ENCODE measurements at regions of chr1 and their contacts with region 1.

Region 1: GRCh38 chr1:183655562-183656075 is 2.5 kb upstream of the APOBEC4 start:
- DNase-seq: peak; percentile 80
- ATAC-seq: peak; percentile 84
- H3K4me3 ChIP-seq: no peak overlapping the region
- H3K4me3 Mint-ChIP-seq: no peak overlapping the region
- H3K27ac ChIP-seq: no peak overlapping the region
- H3K27ac Mint-ChIP-seq: no peak overlapping the region
- H3K4me1 ChIP-seq: no peaks in the 10 kb centered on the region
- H3K4me1 Mint-ChIP-seq: no peaks in the 10 kb centered on the region
- H3K27me3 ChIP-seq: no peaks in the 10 kb centered on the region
- H3K27me3 Mint-ChIP-seq: peaks cover 5% of the 10 kb centered on the region
- CTCF ChIP-seq: peak; percentile 94

Region 2: DNA sequence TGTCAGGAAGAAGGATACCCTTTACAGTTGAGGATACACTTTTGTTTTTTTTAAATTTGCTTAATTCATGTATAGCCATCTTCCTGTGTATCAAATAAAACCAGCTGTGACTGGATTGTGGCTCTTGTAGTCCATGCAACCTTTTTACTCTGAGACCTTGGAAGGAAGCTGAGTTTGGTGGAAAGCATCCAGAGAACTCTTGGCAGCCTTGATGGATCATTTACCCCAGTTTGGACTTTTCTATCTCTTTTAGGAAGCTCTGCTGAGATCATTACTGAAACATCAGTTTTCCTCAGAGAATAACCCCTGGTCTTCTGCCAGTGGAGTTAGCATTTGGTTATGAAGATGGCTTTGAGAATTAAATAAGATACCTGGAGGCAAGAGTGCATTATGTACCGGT is 18.7 kb after region 1 on chr1:
- CTCF ChIA-PET with region 1: no interaction called
- POLR2A ChIA-PET with region 1: no interaction called
- intact Hi-C with region 1: no loop called
- DNase-seq: no peak
- ATAC-seq: no peak
- H3K4me3 ChIP-seq: no peak overlapping the region
- H3K4me3 Mint-ChIP-seq: no peak overlapping the region
- H3K27ac ChIP-seq: no peak overlapping the region
- H3K27ac Mint-ChIP-seq: no peak overlapping the region
- H3K4me1 ChIP-seq: no peaks in the 10 kb centered on the region
- H3K4me1 Mint-ChIP-seq: no peaks in the 10 kb centered on the region
- H3K27me3 ChIP-seq: no peaks in the 10 kb centered on the region
- H3K27me3 Mint-ChIP-seq: peaks cover 39% of the 10 kb centered on the region
- CTCF ChIP-seq: no peak

Region 3: GRCh38 chr1:183685112-183685713 is 29.6 kb after region 1 on chr1:
- CTCF ChIA-PET with region 1: interaction called, 48 read pairs
- POLR2A ChIA-PET with region 1: no interaction called
- intact Hi-C with region 1: loop called (anchors 1 kb)
- DNase-seq: peak; percentile 62
- ATAC-seq: peak; percentile 36
- H3K4me3 ChIP-seq: no peak overlapping the region
- H3K4me3 Mint-ChIP-seq: no peak overlapping the region
- H3K27ac ChIP-seq: no peak overlapping the region
- H3K27ac Mint-ChIP-seq: no peak overlapping the region
- H3K4me1 ChIP-seq: no peaks in the 10 kb centered on the region
- H3K4me1 Mint-ChIP-seq: no peaks in the 10 kb centered on the region
- H3K27me3 ChIP-seq: no peaks in the 10 kb centered on the region
- H3K27me3 Mint-ChIP-seq: peaks cover 15% of the 10 kb centered on the region
- CTCF ChIP-seq: peak; percentile 92

Region 4: DNA sequence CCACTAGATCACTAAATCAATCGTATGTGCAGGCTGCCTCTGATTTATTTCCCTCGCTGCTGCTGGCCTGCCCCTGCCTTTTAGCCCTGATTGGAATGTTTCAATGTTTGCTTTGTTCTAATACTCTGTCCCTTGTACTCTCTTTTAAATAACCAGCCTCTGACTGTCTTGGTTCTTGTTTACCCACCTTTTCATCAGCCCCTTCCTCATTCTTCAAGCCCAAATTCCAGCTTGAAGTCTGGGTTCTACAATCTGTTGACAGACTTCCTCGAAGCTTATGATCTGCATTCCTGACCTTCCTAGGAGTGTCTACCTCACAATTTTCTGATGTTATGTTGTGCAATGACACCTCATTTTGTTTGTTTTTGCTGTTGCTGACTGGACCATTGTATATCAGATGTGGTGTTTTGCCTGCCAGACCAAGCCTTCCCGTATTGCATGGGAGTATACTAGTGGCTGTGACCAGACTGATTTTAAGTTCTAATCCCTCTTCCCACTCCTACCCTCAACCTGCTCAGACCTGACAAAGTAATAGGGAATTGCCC is 44.1 kb after region 1 on chr1:
- CTCF ChIA-PET with region 1: no interaction called
- POLR2A ChIA-PET with region 1: no interaction called
- intact Hi-C with region 1: no loop called
- DNase-seq: no peak
- ATAC-seq: no peak
- H3K4me3 ChIP-seq: no peak overlapping the region
- H3K4me3 Mint-ChIP-seq: no peak overlapping the region
- H3K27ac ChIP-seq: no peak overlapping the region
- H3K27ac Mint-ChIP-seq: no peak overlapping the region
- H3K4me1 ChIP-seq: no peaks in the 10 kb centered on the region
- H3K4me1 Mint-ChIP-seq: no peaks in the 10 kb centered on the region
- H3K27me3 ChIP-seq: no peaks in the 10 kb centered on the region
- H3K27me3 Mint-ChIP-seq: no peaks in the 10 kb centered on the region
- CTCF ChIP-seq: no peak

Region 5: DNA sequence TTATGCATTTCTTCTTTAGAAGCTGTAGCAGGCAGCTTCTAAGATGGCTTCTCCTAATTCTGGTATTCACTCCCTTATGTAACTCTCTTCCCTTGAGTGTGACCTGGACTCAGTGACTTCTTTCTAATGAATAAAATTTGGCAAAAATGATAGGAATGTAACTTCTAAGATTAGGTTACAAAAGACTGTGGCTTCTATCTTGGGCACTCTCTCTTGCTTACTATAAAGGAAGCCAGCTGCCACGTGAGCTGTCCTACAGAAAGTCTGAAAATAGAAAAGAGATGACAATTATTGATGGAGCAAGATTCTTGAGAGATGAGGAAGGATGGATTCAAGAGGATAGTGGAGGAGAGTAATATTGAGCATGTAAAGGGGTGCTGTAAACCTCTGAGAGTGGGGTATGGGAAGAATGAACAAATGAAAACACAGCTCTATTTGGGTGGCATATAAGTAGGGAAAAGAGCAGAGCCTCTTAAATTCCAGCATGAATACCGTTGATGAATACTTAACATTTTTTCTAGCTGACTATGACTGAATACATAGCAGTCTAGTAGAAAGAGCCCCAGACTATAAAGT is 401.4 kb after region 1 on chr1:
- CTCF ChIA-PET with region 1: no interaction called
- POLR2A ChIA-PET with region 1: no interaction called
- intact Hi-C with region 1: no loop called
- DNase-seq: no peak
- ATAC-seq: no peak
- H3K4me3 ChIP-seq: no peak overlapping the region
- H3K4me3 Mint-ChIP-seq: no peak overlapping the region
- H3K27ac ChIP-seq: no peak overlapping the region
- H3K27ac Mint-ChIP-seq: no peak overlapping the region
- H3K4me1 ChIP-seq: peaks cover 8 to 9% of the 10 kb centered on the region in 2 donors
- H3K4me1 Mint-ChIP-seq: peaks cover 19% of the 10 kb centered on the region
- H3K27me3 ChIP-seq: no peaks in the 10 kb centered on the region
- H3K27me3 Mint-ChIP-seq: no peaks in the 10 kb centered on the region
- CTCF ChIP-seq: no peak

Region 6: DNA sequence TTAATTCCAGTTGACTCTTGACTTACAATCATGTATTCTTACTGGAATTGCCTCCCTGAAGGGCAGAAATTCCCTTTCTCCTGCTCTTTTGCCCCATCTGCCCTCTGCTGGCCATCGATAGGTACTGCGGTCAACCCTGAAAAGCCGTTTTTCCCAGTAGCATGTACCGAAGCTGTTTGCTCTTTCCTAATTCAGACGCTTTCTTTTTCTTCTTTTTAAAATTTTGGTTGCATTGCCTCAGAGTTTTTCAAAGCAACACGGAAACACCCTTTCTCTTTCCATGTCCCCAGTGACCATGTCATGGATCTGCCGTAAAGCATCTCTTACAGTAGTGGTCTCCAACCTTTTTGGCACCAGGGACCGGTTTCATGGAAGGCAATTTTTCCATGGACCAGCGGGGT is 567.0 kb after region 1 on chr1:
- CTCF ChIA-PET with region 1: interaction called, 11 read pairs
- POLR2A ChIA-PET with region 1: no interaction called
- intact Hi-C with region 1: no loop called
- DNase-seq: peak; percentile 40
- ATAC-seq: no peak
- H3K4me3 ChIP-seq: no peak overlapping the region
- H3K4me3 Mint-ChIP-seq: no peak overlapping the region
- H3K27ac ChIP-seq: no peak overlapping the region
- H3K27ac Mint-ChIP-seq: no peak overlapping the region
- H3K4me1 ChIP-seq: no peaks in the 10 kb centered on the region
- H3K4me1 Mint-ChIP-seq: no peaks in the 10 kb centered on the region
- H3K27me3 ChIP-seq: no peaks in the 10 kb centered on the region
- H3K27me3 Mint-ChIP-seq: peaks cover 9% of the 10 kb centered on the region
- CTCF ChIP-seq: peak; percentile 81

Region 7: GRCh38 chr1:185238447-185238846 is 1582.8 kb after region 1 on chr1:
- CTCF ChIA-PET with region 1: no interaction called
- POLR2A ChIA-PET with region 1: no interaction called
- intact Hi-C with region 1: no loop called
- DNase-seq: peak; percentile 10
- ATAC-seq: no peak
- H3K4me3 ChIP-seq: no peak overlapping the region
- H3K4me3 Mint-ChIP-seq: no peak overlapping the region
- H3K27ac ChIP-seq: no peak overlapping the region
- H3K27ac Mint-ChIP-seq: no peak overlapping the region
- H3K4me1 ChIP-seq: no peaks in the 10 kb centered on the region
- H3K4me1 Mint-ChIP-seq: no peaks in the 10 kb centered on the region
- H3K27me3 ChIP-seq: no peaks in the 10 kb centered on the region
- H3K27me3 Mint-ChIP-seq: no peaks in the 10 kb centered on the region
- CTCF ChIP-seq: peak; percentile 31